ENCODE measurements at regions of chr17 and their contacts with region 1.

Region 1: DNA sequence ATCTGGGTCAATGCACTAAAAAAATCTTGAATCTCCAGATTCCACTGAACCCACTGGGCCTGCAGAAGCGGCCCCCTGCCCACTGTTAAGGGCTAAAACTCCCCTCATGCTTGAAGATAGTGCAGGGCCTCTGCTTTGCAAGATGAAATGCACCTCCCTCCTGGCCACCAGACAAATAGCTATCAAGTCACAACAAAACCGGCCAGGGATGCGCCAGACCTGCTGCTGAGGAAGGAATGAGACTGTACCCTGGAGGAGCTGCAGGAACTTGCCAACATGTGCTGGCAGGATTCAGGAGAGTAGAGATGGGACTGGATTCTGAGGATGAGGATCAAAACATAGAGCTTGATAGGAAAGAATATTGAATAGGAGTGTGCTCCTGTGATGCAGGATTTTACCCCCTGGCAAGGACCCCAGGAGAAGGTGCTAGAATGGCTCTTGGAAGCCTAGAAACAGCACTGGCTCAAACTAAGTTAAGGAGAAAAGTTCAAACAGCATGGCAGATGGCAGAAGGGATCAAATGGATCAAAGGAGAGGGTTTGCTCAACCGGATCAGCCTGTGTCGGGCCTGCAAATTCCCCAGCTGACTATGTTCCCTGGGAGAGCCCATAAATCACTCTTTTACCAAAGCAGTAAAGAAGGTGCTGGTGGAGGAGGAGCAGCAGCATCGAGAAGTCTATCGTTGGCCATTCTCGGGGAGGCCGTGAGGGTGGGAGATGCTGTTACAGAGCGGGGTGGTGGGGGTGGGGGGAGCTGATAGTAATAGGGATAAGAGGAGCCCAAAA is 27.2 kb upstream of the XYLT2 start:
- DNase-seq: peak in 2 of 10 donors; percentile 25 to 52

Region 2: DNA sequence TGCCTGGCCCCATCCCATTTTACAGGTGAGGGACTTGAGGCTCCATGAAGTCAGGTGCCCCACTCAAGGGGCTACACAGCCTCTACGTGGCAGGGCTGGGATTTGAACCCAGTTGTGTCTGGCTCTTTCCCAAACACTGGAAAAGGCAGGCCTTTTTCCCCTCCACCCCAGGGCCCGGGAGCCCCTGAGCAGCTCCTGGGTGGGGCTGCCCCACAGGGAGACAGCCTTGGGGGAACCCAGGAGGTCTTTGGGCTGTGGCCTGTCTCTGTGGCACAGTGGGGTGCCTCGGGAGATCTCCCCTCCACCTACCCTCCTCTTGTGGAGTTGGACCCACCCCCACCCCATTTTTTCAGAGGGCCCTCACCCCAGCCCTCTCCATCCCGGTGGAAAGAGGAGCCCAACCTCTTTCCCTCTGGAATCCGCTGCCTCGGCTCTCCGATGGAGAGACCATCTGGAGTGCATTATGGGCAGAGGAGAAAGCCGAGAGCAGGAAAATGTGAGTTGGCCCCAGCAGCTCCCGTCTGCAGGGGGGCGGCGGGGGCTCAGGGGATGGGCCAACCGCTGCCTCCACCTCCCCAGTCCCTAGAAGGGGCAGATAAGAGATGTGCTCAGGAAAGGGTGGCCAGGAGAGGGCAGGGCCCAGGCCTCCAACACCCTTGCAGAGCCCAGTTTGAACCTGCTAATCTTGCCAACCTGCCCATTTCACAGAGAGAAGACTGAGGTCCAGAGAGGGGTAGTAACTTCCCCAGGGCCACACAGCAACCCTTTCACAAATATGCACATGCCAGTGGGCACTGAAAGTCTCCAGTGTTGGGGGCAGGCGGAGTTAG is 59.8 kb before region 1 on chr17:
- intact Hi-C with region 1: loop called (anchors 10 kb)
- DNase-seq: peak in 1 of 10 donors; percentile 59

Measured in posterior cingulate gyrus (tissue), 11 donors.